A673 (cell line): ENCODE measurements at regions of chr13 and their contacts with region 1.

Region 1: GRCh38 chr13:102724923-102725322 is 30.1 kb upstream of the METTL21C start:
- DNase-seq: peak; percentile 60
- H3K4me3 ChIP-seq: no peak overlapping the region
- H3K27ac ChIP-seq: no peak overlapping the region
- H3K4me1 ChIP-seq: peaks cover 3% of the 10 kb centered on the region
- H3K27me3 ChIP-seq: no peaks in the 10 kb centered on the region
- CTCF ChIP-seq: peak; percentile 65

Region 2: DNA sequence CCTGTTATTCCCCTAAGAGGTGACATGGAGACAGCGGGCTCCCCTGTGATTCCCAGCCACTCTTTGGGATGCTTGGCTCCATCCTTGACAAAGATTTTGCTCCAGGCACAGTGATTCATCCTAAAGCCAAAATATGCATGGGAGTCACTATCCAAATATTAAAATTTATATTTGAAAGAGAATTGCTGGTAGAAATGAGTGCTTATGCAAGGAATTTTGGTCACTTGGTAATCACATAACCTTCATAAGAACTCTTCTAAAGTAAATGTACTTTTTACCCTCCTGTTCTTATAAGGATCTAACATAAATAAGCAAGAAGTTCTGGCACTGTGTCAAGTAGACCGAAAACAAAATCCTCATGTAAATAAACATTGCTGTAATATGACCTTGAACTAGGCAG is 886.6 kb before region 1 on chr13:
- CTCF ChIA-PET with region 1: no interaction called
- POLR2A ChIA-PET with region 1: no interaction called
- intact Hi-C with region 1: no loop called
- DNase-seq: no peak
- H3K4me3 ChIP-seq: no peak overlapping the region
- H3K27ac ChIP-seq: no peak overlapping the region
- H3K4me1 ChIP-seq: no peaks in the 10 kb centered on the region
- H3K27me3 ChIP-seq: no peaks in the 10 kb centered on the region
- CTCF ChIP-seq: no peak

Region 3: DNA sequence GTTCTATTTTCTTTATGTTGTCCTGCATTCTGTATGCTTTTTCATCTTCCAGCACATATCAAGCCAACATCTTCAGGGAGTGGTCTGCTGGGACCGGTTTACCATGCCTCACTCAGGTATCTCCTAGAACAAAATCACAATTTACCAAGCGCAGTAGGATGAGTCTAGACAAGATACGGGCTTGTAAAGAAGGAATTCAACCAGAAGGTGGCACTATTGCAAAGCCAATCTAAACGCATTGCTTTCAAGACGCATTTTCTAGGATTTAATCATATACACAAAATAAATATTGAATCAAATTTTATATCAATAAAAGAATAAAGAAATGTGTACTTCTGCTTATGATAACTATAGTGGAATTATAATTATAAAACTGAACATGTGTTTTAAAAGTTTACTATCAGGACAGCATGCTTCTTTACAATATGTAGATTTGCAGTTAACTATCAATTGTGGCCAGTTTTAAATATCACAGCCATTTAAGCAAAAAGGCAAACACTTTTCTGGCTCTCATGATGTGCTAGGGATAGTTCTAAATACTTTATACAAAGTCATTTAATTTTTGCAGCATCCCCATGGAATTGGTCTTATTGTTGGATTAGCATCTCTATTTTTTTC is 144.3 kb before region 1 on chr13:
- CTCF ChIA-PET with region 1: interaction called, 6 read pairs
- POLR2A ChIA-PET with region 1: no interaction called
- intact Hi-C with region 1: loop called (anchors 5 kb)
- DNase-seq: peak; percentile 69
- H3K4me3 ChIP-seq: no peak overlapping the region
- H3K27ac ChIP-seq: no peak overlapping the region
- H3K4me1 ChIP-seq: no peaks in the 10 kb centered on the region
- H3K27me3 ChIP-seq: no peaks in the 10 kb centered on the region
- CTCF ChIP-seq: peak; percentile 79

Region 4: GRCh38 chr13:102591988-102592781 is 132.7 kb before region 1 on chr13:
- CTCF ChIA-PET with region 1: interaction called, 12 read pairs
- POLR2A ChIA-PET with region 1: interaction called, 4 read pairs
- intact Hi-C with region 1: loop called (anchors 5 kb)
- DNase-seq: peak; percentile 86
- H3K4me3 ChIP-seq: peak overlapping the region; percentile 59
- H3K27ac ChIP-seq: peak overlapping the region; percentile 11
- H3K4me1 ChIP-seq: peaks cover 12% of the 10 kb centered on the region
- H3K27me3 ChIP-seq: no peaks in the 10 kb centered on the region
- CTCF ChIP-seq: peak; percentile 84

Region 5: DNA sequence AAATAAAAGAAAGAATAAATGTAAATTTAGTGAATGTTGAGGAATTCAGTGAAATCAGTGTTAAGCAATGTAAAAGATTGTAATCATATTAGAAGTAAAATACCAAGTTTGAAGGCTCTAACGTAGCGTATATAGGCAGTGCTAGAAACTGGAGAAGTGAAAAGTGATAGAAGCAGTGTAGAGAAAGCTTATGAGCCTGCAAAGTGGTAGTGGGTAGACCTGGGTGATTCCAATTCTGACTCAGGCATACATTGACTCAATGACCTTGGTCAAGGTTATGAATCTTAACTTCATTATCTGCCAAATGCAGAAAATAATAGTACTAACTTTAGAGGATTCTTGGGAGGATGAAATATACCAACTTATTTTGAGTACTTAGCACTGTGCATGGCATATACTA is 337.2 kb after region 1 on chr13:
- CTCF ChIA-PET with region 1: no interaction called
- POLR2A ChIA-PET with region 1: interaction called, 10 read pairs
- intact Hi-C with region 1: no loop called
- DNase-seq: no peak
- H3K4me3 ChIP-seq: no peak overlapping the region
- H3K27ac ChIP-seq: no peak overlapping the region
- H3K4me1 ChIP-seq: no peaks in the 10 kb centered on the region
- H3K27me3 ChIP-seq: peaks cover 13% of the 10 kb centered on the region
- CTCF ChIP-seq: no peak